Thyroid gland (tissue), 4 donors: ENCODE measurements at regions of chr13 and their contacts with region 1.

Region 1: GRCh38 chr13:99200432-99201167 is at the start of gene UBAC2:
- DNase-seq: peak; percentile 95 to 97
- H3K4me3 ChIP-seq: peak within 1 kb of the TSS; percentile 64 to 99 (median 96)
- H3K27ac ChIP-seq: peak within 1 kb of the TSS; percentile 99
- H3K4me1 ChIP-seq: peaks cover 21 to 42% of the 10 kb centered on the region in 2 donors
- H3K27me3 ChIP-seq: no peaks in the 10 kb centered on the region
- CTCF ChIP-seq: no peak
- POLR2A ChIP-seq: peak; percentile 28 to 95
- total RNA-seq, gene UBAC2: 56.8 to 88.5 (median 77.7) TPM

Region 2: GRCh38 chr13:97432917-97433726 is 1767.5 kb before region 1 on chr13:
- intact Hi-C with region 1: loop called (anchors 10 kb)
- DNase-seq: peak; percentile 99
- H3K4me3 ChIP-seq: peak overlapping the region; percentile 61 to 72 (median 71)
- H3K27ac ChIP-seq: peak overlapping the region; percentile 95 to 100 (median 99)
- H3K4me1 ChIP-seq: peaks cover 0 to 8% of the 10 kb centered on the region in 2 donors
- H3K27me3 ChIP-seq: no peaks in the 10 kb centered on the region
- CTCF ChIP-seq: peak in 1 of 6 experiments; percentile 14
- POLR2A ChIP-seq: peak; percentile 10 to 60

Region 3: DNA sequence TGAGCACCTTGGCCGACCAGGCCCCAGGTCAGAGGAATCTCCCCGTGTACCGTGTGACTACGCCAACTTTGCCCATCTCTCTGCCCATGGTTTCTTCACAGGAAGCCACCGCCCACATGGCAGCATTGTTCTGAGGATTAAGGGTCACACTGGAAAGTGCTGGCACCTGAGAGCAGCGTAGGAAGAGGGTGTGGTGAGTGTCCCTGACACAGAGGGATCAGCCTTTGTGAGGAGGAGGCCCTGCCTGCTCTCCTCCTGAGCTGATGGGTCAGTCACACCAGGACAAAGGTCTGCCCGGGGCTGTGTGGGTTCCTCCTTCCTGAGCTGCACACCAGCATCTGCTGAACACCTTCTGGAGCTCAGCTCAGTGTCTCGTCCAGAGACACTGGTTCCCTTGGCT is 415.9 kb before region 1 on chr13:
- intact Hi-C with region 1: no loop called
- DNase-seq: no peak
- H3K4me3 ChIP-seq: no peak overlapping the region
- H3K27ac ChIP-seq: no peak overlapping the region
- H3K4me1 ChIP-seq: no peaks in the 10 kb centered on the region
- H3K27me3 ChIP-seq: no peaks in the 10 kb centered on the region
- CTCF ChIP-seq: no peak
- POLR2A ChIP-seq: no peak

Region 4: DNA sequence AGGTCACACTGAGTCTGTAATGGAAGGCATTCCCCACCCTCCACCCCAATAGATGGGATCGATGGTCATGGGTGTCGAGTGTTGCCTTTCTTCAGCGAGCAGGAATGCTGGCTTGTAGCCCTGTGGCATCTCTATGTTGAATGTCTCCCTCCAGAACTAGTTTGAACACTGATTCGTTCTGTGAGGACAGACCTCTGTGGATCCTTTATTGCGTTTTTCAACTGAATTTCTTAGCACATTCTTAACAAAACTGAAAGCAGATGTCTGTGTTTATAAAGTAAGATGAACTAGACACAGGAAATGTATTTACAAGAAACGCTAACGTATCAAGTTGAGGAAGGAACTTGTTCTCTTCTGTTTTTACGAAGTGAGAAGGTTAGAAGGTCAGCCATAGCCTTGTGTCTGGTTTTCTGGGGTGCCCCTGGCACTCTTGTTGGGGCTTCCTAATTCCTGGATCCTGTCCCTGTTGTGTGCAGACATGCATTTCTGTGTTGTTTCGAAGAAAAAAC is 263.9 kb after region 1 on chr13:
- intact Hi-C with region 1: no loop called
- DNase-seq: no peak
- H3K4me3 ChIP-seq: no peak overlapping the region
- H3K27ac ChIP-seq: no peak overlapping the region
- H3K4me1 ChIP-seq: no peaks in the 10 kb centered on the region
- H3K27me3 ChIP-seq: no peaks in the 10 kb centered on the region
- CTCF ChIP-seq: no peak
- POLR2A ChIP-seq: no peak